ENCODE measurements at regions of chr12 and their contacts with region 1.

Region 1: DNA sequence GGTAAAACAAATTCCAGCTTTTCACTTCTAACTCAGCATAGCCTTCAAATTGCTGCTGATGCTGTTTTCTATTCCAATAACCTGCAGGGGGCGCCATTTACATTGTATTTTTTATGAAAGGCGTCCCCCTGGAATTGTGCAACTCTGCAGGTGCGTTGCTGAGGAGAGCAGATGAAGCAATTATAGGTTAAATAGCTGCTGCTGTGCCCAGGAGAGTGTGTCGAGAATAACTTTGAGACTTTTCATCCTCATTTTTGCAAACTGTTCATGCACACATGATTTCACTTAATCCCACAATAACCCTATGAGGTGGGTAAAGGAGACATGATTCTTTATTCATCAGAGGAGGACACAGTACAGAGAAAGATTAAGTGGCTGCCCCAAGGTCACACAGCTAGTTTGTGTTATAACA is 75.7 kb downstream of the MYRFL start:
- DNase-seq: peak; percentile 75
- H3K4me3 ChIP-seq: no peak overlapping the region
- H3K27ac ChIP-seq: no peak overlapping the region
- H3K4me1 ChIP-seq: peaks cover 34% of the 10 kb centered on the region
- H3K27me3 ChIP-seq: no peaks in the 10 kb centered on the region
- CTCF ChIP-seq: peak; percentile 64 to 69

Region 2: GRCh38 chr12:69879041-69879960 is 21.4 kb before region 1 on chr12:
- CTCF ChIA-PET with region 1: no interaction called
- dilution Hi-C with region 1: no loop called
- in situ Hi-C with region 1: no loop called
- intact Hi-C with region 1: loop called (anchors 1 kb)
- DNase-seq: peak; percentile 55
- H3K4me3 ChIP-seq: peak overlapping the region; percentile 4 to 32 (median 28)
- H3K27ac ChIP-seq: no peak overlapping the region
- H3K4me1 ChIP-seq: peaks cover 6% of the 10 kb centered on the region
- H3K27me3 ChIP-seq: no peaks in the 10 kb centered on the region
- CTCF ChIP-seq: peak; percentile 92 to 96

Region 3: GRCh38 chr12:69985656-69986055 is 84.9 kb after region 1 on chr12:
- CTCF ChIA-PET with region 1: no interaction called
- dilution Hi-C with region 1: no loop called
- in situ Hi-C with region 1: no loop called
- intact Hi-C with region 1: loop called (anchors 5 kb)
- DNase-seq: no peak
- H3K4me3 ChIP-seq: no peak overlapping the region
- H3K27ac ChIP-seq: no peak overlapping the region
- H3K4me1 ChIP-seq: peaks cover 11% of the 10 kb centered on the region
- H3K27me3 ChIP-seq: no peaks in the 10 kb centered on the region
- CTCF ChIP-seq: peak; percentile 36 to 42

Region 4: DNA sequence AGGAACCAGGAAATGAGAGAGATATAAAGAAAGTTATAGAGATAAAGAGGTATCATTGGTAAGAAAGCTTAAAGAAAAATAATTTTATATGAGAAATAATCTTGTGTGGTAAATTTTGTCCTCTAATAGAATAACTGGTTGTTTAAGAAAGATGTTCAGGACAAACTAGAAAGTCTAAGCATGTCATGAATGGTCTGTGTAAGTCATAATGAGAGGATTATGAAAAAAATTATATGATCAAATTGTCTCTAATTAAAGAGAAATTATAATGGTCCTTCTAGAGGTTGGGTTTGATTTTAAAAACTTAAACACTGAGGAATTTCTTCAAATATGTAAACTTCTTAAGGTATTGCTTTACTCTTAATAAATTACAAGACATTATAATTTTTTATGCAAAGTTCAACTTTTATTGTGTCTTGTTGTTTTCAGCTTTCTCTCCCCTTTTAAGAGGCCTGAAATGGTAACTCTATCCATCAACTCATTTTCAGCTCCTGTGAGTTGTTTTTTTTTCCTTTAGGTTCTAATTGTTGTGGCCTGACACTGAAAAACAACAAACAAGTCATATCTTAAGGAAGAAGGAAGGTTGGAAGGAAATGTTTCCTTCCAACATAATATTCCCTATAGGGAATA is 254.3 kb after region 1 on chr12:
- CTCF ChIA-PET with region 1: no interaction called
- dilution Hi-C with region 1: no loop called
- in situ Hi-C with region 1: no loop called
- intact Hi-C with region 1: loop called (anchors 10 kb)
- DNase-seq: peak; percentile 26
- H3K4me3 ChIP-seq: no peak overlapping the region
- H3K27ac ChIP-seq: no peak overlapping the region
- H3K4me1 ChIP-seq: no peaks in the 10 kb centered on the region
- H3K27me3 ChIP-seq: no peaks in the 10 kb centered on the region
- CTCF ChIP-seq: no peak

Region 5: GRCh38 chr12:70290116-70290515 is 389.4 kb after region 1 on chr12:
- CTCF ChIA-PET with region 1: no interaction called
- dilution Hi-C with region 1: no loop called
- in situ Hi-C with region 1: no loop called
- intact Hi-C with region 1: no loop called
- DNase-seq: no peak
- H3K4me3 ChIP-seq: no peak overlapping the region
- H3K27ac ChIP-seq: no peak overlapping the region
- H3K4me1 ChIP-seq: no peaks in the 10 kb centered on the region
- H3K27me3 ChIP-seq: no peaks in the 10 kb centered on the region
- CTCF ChIP-seq: no peak

Region 6: GRCh38 chr12:70330159-70330558 is 429.4 kb after region 1 on chr12:
- CTCF ChIA-PET with region 1: no interaction called
- dilution Hi-C with region 1: no loop called
- in situ Hi-C with region 1: no loop called
- intact Hi-C with region 1: loop called (anchors 2 kb)
- DNase-seq: no peak
- H3K4me3 ChIP-seq: no peak overlapping the region
- H3K27ac ChIP-seq: no peak overlapping the region
- H3K4me1 ChIP-seq: peaks cover 9% of the 10 kb centered on the region
- H3K27me3 ChIP-seq: no peaks in the 10 kb centered on the region
- CTCF ChIP-seq: no peak

Region 7: GRCh38 chr12:70576346-70577282 is 675.9 kb after region 1 on chr12:
- CTCF ChIA-PET with region 1: no interaction called
- dilution Hi-C with region 1: loop called (anchors 25 kb)
- in situ Hi-C with region 1: loop called in 1 of 2 experiments (anchors 5 kb)
- intact Hi-C with region 1: loop called (anchors 1 kb)
- DNase-seq: peak; percentile 62
- H3K4me3 ChIP-seq: no peak overlapping the region
- H3K27ac ChIP-seq: no peak overlapping the region
- H3K4me1 ChIP-seq: no peaks in the 10 kb centered on the region
- H3K27me3 ChIP-seq: no peaks in the 10 kb centered on the region
- CTCF ChIP-seq: peak; percentile 67 to 81

Measured in mammary epithelial cell (primary cell).